ENCODE measurements at regions of chr7 and their contacts with region 1.

Region 1: GRCh38 chr7:73577627-73578341 is 595 bp downstream of the TBL2 start:
- DNase-seq: no peak
- H3K4me3 ChIP-seq: peak overlapping the region; percentile 74 to 94
- H3K27ac ChIP-seq: peak overlapping the region; percentile 88 to 89
- H3K4me1 ChIP-seq: peaks cover 0 to 32% (median 20%) of the 10 kb centered on the region in 4 donors
- H3K27me3 ChIP-seq: no peaks in the 10 kb centered on the region
- CTCF ChIP-seq: no peak

Region 2: DNA sequence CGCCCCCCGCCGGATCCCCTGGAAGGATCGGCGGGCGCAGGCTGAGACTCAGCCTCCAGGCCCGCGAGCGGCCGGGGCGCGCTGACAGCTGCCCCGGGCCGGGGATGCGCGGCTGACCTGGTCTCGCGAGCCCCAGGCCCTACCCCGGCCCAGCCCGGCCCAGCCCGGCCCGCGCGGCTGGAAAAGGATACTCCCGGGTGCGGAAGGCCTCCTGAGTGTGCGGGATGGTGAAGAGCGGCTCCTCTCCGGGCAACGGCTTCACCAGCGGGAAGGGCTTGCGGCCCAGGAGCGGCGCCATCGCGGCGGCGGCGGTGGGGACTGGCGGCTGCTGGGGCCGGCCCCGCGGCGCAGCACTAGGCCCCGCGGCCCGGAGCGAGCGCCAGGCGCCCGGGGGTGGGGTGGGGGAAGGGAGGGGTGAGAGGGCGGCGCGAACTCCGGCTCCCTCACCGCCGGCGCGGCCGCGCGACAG is 56.1 kb before region 1 on chr7:
- intact Hi-C with region 1: loop called (anchors 2 kb)
- DNase-seq: peak in 1 of 2 donors; percentile 23
- H3K4me3 ChIP-seq: peak overlapping the region; percentile 79 to 99
- H3K27ac ChIP-seq: peak overlapping the region; percentile 95 to 96
- H3K4me1 ChIP-seq: peaks cover 6 to 48% (median 32%) of the 10 kb centered on the region in 4 donors
- H3K27me3 ChIP-seq: no peaks in the 10 kb centered on the region
- CTCF ChIP-seq: no peak

Region 3: GRCh38 chr7:73560109-73560835 is 17.5 kb before region 1 on chr7:
- intact Hi-C with region 1: loop called (anchors 2 kb)
- DNase-seq: no peak
- H3K4me3 ChIP-seq: no peak overlapping the region
- H3K27ac ChIP-seq: no peak overlapping the region
- H3K4me1 ChIP-seq: peaks cover 0 to 17% (median 14%) of the 10 kb centered on the region in 4 donors
- H3K27me3 ChIP-seq: no peaks in the 10 kb centered on the region
- CTCF ChIP-seq: no peak

Region 4: GRCh38 chr7:74542558-74543117 is 964.9 kb after region 1 on chr7:
- intact Hi-C with region 1: no loop called
- DNase-seq: no peak
- H3K4me3 ChIP-seq: no peak overlapping the region
- H3K27ac ChIP-seq: no peak overlapping the region
- H3K4me1 ChIP-seq: peaks cover 0 to 4% (median 0%) of the 10 kb centered on the region in 4 donors
- H3K27me3 ChIP-seq: no peaks in the 10 kb centered on the region
- CTCF ChIP-seq: no peak

Measured in tibial artery (tissue), 4 donors.